ENCODE measurements at regions of chr11 and their contacts with region 1.

Region 1: DNA sequence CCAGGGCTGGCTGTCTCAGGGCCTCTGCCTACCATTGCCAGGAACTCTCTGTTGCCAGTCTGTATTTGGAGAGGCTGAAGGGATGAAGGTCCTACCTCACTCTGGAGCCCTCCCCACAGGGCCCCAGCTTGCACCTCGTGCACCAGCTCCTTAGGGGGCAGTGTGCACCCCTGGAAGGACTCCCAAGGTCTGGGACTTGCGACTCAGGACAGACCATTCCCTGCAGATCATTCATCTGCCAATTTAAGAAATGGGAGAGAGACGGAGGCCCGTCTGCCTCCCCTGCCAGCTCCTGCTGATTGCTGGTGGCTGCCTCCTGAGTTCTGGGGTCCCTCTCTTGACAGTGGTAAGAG is 27.5 kb upstream of the MALAT1 start:
- DNase-seq: peak; percentile 64
- H3K4me3 Mint-ChIP-seq: peak overlapping the region; percentile 69
- H3K27ac Mint-ChIP-seq: peak overlapping the region; percentile 95
- H3K4me1 Mint-ChIP-seq: peaks cover 44% of the 10 kb centered on the region
- H3K27me3 Mint-ChIP-seq: no peaks in the 10 kb centered on the region

Region 2: GRCh38 chr11:65436412-65437032 is 34.9 kb before region 1 on chr11:
- CTCF ChIA-PET with region 1: interaction called, 3 read pairs
- intact Hi-C with region 1: loop called (anchors 1 kb)
- DNase-seq: peak; percentile 39
- H3K4me3 Mint-ChIP-seq: no peak overlapping the region
- H3K27ac Mint-ChIP-seq: peak overlapping the region; percentile 60
- H3K4me1 Mint-ChIP-seq: peaks cover 83% of the 10 kb centered on the region
- H3K27me3 Mint-ChIP-seq: no peaks in the 10 kb centered on the region

Region 3: GRCh38 chr11:65454696-65455456 is 16.5 kb before region 1 on chr11:
- CTCF ChIA-PET with region 1: interaction called, 7 read pairs
- intact Hi-C with region 1: loop called (anchors 2 kb)
- DNase-seq: peak; percentile 86
- H3K4me3 Mint-ChIP-seq: peak overlapping the region; percentile 90
- H3K27ac Mint-ChIP-seq: peak overlapping the region; percentile 82
- H3K4me1 Mint-ChIP-seq: peaks cover 37% of the 10 kb centered on the region
- H3K27me3 Mint-ChIP-seq: no peaks in the 10 kb centered on the region

Region 4: GRCh38 chr11:65497141-65498041 is 26.0 kb after region 1 on chr11:
- CTCF ChIA-PET with region 1: interaction called, 20 read pairs
- intact Hi-C with region 1: loop called (anchors 1 kb)
- DNase-seq: peak; percentile 99
- H3K4me3 Mint-ChIP-seq: no peak overlapping the region
- H3K27ac Mint-ChIP-seq: no peak overlapping the region
- H3K4me1 Mint-ChIP-seq: peaks cover 37% of the 10 kb centered on the region
- H3K27me3 Mint-ChIP-seq: no peaks in the 10 kb centered on the region

Measured in activated naive CD4-positive, alpha-beta T cell treated with anti-CD3 and anti-CD28 coated beads for 36 hours (primary cell).